Mammary epithelial cell (primary cell): ENCODE measurements at regions of chr4 and their contacts with region 1.

Region 1: GRCh38 chr4:120049732-120050494 is 16.7 kb downstream of the MAD2L1 start:
- DNase-seq: peak; percentile 61
- H3K4me3 ChIP-seq: no peak overlapping the region
- H3K27ac ChIP-seq: no peak overlapping the region
- H3K4me1 ChIP-seq: no peaks in the 10 kb centered on the region
- H3K27me3 ChIP-seq: no peaks in the 10 kb centered on the region
- CTCF ChIP-seq: peak; percentile 87 to 88

Region 2: DNA sequence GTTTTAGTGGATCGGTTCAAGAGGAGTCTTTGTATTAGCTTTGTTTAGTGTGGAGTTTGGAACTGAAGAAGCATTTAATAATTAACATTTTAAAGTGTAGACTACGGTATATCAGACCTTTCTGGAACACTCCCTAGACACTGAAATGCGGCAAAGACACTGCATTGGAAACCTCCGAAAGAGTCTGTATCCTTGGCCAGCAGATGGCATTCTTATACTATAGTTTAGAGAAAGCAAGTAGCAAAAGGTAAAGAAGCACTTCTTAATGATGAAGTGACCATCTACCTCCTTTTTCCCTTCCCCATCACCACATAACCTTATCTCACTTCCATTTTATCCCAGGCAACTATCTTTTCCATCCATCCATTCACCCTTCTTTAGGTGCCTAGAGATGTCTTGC is 735.6 kb before region 1 on chr4:
- CTCF ChIA-PET with region 1: no interaction called
- dilution Hi-C with region 1: no loop called
- in situ Hi-C with region 1: loop called (anchors 10 kb)
- intact Hi-C with region 1: loop called (anchors 1 kb)
- DNase-seq: peak; percentile 36
- H3K4me3 ChIP-seq: no peak overlapping the region
- H3K27ac ChIP-seq: no peak overlapping the region
- H3K4me1 ChIP-seq: no peaks in the 10 kb centered on the region
- H3K27me3 ChIP-seq: no peaks in the 10 kb centered on the region
- CTCF ChIP-seq: peak; percentile 45 to 61

Region 3: GRCh38 chr4:119525005-119525749 is 524.7 kb before region 1 on chr4:
- CTCF ChIA-PET with region 1: no interaction called
- dilution Hi-C with region 1: no loop called
- in situ Hi-C with region 1: loop called in 1 of 2 experiments (anchors 25 kb)
- intact Hi-C with region 1: no loop called
- DNase-seq: peak; percentile 53
- H3K4me3 ChIP-seq: no peak overlapping the region
- H3K27ac ChIP-seq: no peak overlapping the region
- H3K4me1 ChIP-seq: peaks cover 12% of the 10 kb centered on the region
- H3K27me3 ChIP-seq: no peaks in the 10 kb centered on the region
- CTCF ChIP-seq: no peak

Region 4: DNA sequence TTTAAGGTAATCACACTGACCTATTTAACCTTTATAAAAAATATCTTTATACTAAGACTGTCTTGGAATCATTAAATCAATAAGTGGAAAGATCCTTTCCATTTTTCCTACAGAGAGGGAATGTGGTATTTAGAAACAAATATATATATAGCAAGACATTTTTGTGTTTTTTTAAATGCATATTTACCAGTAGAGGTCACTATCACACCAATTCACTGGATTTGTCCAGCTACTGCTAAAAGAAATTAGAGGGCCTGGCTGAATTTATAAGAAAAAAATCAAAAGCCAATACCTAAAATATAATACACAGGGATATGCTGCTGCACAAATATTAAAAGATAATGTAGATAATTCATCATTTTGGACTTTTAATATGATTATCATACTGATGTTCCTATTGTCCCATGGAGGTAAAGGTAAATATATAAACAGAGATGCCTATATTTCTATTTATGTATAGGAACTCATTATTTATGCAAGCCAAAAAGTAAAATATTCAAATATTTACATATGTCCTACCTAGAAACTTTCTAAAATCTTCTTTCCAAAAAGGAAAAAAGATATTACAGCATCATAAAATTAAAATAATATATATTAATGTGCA is 490.8 kb before region 1 on chr4:
- CTCF ChIA-PET with region 1: no interaction called
- dilution Hi-C with region 1: no loop called
- in situ Hi-C with region 1: no loop called
- intact Hi-C with region 1: loop called (anchors 1 kb)
- DNase-seq: peak; percentile 19
- H3K4me3 ChIP-seq: no peak overlapping the region
- H3K27ac ChIP-seq: no peak overlapping the region
- H3K4me1 ChIP-seq: no peaks in the 10 kb centered on the region
- H3K27me3 ChIP-seq: no peaks in the 10 kb centered on the region
- CTCF ChIP-seq: peak; percentile 22 to 52

Region 5: GRCh38 chr4:119628308-119629141 is 421.4 kb before region 1 on chr4 and contains the start of gene PDE5A:
- CTCF ChIA-PET with region 1: no interaction called
- dilution Hi-C with region 1: no loop called
- in situ Hi-C with region 1: no loop called
- intact Hi-C with region 1: loop called (anchors 1 kb)
- DNase-seq: peak; percentile 87
- H3K4me3 ChIP-seq: peak within 1 kb of the TSS; percentile 72 to 85 (median 81)
- H3K27ac ChIP-seq: no peak within 1 kb of the TSS
- H3K4me1 ChIP-seq: peaks cover 12% of the 10 kb centered on the region
- H3K27me3 ChIP-seq: no peaks in the 10 kb centered on the region
- CTCF ChIP-seq: peak; percentile 56 to 64
- total RNA-seq, gene PDE5A: 4.3 to 17.3 TPM

Region 6: GRCh38 chr4:119692001-119692400 is 357.9 kb before region 1 on chr4:
- CTCF ChIA-PET with region 1: no interaction called
- dilution Hi-C with region 1: no loop called
- in situ Hi-C with region 1: no loop called
- intact Hi-C with region 1: loop called (anchors 1 kb)
- DNase-seq: peak; percentile 3
- H3K4me3 ChIP-seq: no peak overlapping the region
- H3K27ac ChIP-seq: no peak overlapping the region
- H3K4me1 ChIP-seq: no peaks in the 10 kb centered on the region
- H3K27me3 ChIP-seq: no peaks in the 10 kb centered on the region
- CTCF ChIP-seq: peak in 1 of 2 donors; percentile 42

Region 7: GRCh38 chr4:119785963-119786362 is 263.9 kb before region 1 on chr4:
- CTCF ChIA-PET with region 1: no interaction called
- dilution Hi-C with region 1: no loop called
- in situ Hi-C with region 1: no loop called
- intact Hi-C with region 1: loop called (anchors 2 kb)
- DNase-seq: peak; percentile 5
- H3K4me3 ChIP-seq: no peak overlapping the region
- H3K27ac ChIP-seq: no peak overlapping the region
- H3K4me1 ChIP-seq: no peaks in the 10 kb centered on the region
- H3K27me3 ChIP-seq: no peaks in the 10 kb centered on the region
- CTCF ChIP-seq: peak; percentile 20 to 59

Region 8: GRCh38 chr4:121156822-121157769 is 1107.2 kb after region 1 on chr4:
- CTCF ChIA-PET with region 1: no interaction called
- dilution Hi-C with region 1: no loop called
- in situ Hi-C with region 1: no loop called
- intact Hi-C with region 1: no loop called
- DNase-seq: no peak
- H3K4me3 ChIP-seq: peak overlapping the region in 2 of 3 experiments; percentile 10 to 17
- H3K27ac ChIP-seq: no peak overlapping the region
- H3K4me1 ChIP-seq: peaks cover 7% of the 10 kb centered on the region
- H3K27me3 ChIP-seq: no peaks in the 10 kb centered on the region
- CTCF ChIP-seq: no peak